Activated CD8-positive, alpha-beta T cell treated with anti-CD3 and anti-CD28 coated beads, Interleukin-2, amount 10 ng/mL, durations not matched to agents 7 days and 5 days (primary cell): ENCODE measurements at regions of chr20 and their contacts with region 1.

Region 1: GRCh38 chr20:47272893-47273590 is 83.5 kb downstream of the ZMYND8 start:
- DNase-seq: peak; percentile 68
- ATAC-seq: peak; percentile 59
- H3K4me3 Mint-ChIP-seq: no peak overlapping the region
- H3K27ac Mint-ChIP-seq: no peak overlapping the region
- H3K4me1 Mint-ChIP-seq: peaks cover 39% of the 10 kb centered on the region
- H3K27me3 Mint-ChIP-seq: no peaks in the 10 kb centered on the region

Region 2: DNA sequence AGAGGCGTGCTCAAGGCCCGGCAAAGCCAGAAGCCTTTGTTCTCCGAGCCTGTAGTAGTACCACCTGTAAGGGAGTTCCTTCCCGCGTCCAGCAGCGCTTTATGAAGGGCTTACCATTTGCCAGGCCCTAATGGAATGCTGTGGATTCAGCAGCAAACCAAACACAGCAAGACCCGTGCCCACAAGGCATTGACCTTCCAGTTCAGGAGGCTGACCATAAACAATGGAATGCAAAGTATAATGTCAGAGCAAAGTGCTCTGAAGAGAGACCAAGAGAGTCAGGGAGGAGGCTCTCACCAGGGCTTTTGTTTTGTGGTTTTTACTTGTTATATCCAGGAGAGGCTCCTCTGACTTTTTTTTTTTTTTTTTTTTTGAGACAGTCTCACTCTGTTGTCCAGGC is 126.3 kb before region 1 on chr20:
- CTCF ChIA-PET with region 1: no interaction called
- POLR2A ChIA-PET with region 1: no interaction called
- DNase-seq: no peak
- ATAC-seq: no peak
- H3K4me3 Mint-ChIP-seq: no peak overlapping the region
- H3K27ac Mint-ChIP-seq: no peak overlapping the region
- H3K4me1 Mint-ChIP-seq: peaks cover 3% of the 10 kb centered on the region
- H3K27me3 Mint-ChIP-seq: peaks cover 2% of the 10 kb centered on the region

Region 3: DNA sequence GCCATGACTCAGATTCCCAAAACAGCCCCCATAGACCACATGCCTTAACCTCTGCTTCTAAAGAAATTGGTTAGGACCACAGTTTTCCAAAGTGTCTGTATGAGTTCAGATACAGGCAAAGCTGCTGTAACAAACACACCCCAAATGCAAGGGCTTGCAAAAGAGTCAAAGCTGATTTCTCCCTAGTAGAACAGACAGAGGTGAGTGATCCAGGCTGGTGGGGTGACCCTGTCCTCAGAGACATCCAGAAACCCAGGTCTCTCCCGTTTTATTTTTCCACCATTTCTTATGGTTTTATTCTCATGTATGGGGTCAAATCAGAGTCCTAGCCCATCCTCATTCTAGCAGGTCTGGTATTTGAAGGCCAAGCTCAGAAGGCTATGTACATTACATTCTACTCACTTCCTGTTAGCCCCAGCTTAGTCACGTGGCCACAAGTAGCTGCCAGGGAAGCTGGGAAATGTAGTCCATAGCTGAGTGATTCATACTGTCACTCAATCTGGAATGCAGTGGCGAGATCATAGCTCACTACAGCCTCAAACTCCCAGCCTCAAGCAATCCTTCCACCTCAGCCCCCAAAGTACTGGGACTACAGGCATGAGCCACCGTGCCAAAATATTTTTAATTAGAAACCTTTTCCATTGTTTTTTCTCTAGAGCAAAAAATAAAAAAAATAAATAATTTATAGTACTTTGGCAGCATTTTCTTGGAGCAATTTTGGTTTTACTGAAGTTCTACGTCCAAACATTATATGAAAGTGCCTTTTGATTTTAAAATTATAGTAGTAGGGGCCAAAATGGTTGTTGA is 91.8 kb before region 1 on chr20:
- CTCF ChIA-PET with region 1: no interaction called
- POLR2A ChIA-PET with region 1: no interaction called
- DNase-seq: peak; percentile 50
- ATAC-seq: peak; percentile 57
- H3K4me3 Mint-ChIP-seq: no peak overlapping the region
- H3K27ac Mint-ChIP-seq: no peak overlapping the region
- H3K4me1 Mint-ChIP-seq: peaks cover 2% of the 10 kb centered on the region
- H3K27me3 Mint-ChIP-seq: peaks cover 5% of the 10 kb centered on the region

Region 4: GRCh38 chr20:47205577-47206498 is 67.2 kb before region 1 on chr20:
- CTCF ChIA-PET with region 1: interaction called, 22 read pairs
- POLR2A ChIA-PET with region 1: no interaction called
- DNase-seq: peak; percentile 74
- ATAC-seq: peak; percentile 68
- H3K4me3 Mint-ChIP-seq: no peak overlapping the region
- H3K27ac Mint-ChIP-seq: peak overlapping the region; percentile 56
- H3K4me1 Mint-ChIP-seq: peaks cover 7% of the 10 kb centered on the region
- H3K27me3 Mint-ChIP-seq: no peaks in the 10 kb centered on the region

Region 5: DNA sequence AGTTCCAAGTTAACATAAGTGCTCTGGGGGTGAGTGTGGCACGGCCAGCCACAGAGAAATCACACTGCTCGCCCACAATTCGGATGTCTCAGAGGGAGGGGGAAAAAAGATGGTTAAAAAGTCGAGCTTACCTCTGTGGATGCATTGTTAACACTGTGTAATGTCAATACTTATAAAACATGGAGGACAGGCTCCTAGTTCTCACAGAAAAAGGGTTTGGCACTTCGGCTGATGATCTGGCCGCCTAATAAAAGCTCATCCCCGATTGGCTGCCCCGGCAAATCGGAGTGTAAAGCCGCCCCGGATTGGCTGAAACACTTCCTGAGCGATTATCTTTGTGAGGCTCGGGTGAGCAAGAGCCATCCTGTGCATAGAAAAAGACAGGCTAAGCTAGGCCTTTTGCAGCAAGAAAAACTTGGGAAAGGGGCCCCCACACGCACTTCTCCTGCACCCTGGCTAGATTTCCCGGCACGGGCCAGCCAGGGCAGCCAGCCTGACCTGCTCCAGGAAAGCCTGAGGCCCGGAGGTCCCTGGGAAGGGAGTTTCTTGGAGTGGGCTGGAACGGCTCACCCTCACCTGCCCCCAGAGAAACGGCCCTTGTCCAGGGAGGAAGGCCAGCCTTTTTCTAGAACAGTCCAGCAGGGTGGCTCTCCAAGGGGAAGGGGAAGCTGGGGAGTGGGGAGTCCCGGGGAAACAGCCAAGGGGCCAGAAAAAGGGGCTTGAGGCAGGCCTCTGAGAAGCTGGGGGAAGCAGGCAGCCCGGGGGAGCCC is 83.7 kb after region 1 on chr20 and contains the start of gene ZMYND8:
- CTCF ChIA-PET with region 1: interaction called, 88 read pairs
- POLR2A ChIA-PET with region 1: interaction called, 6 read pairs
- DNase-seq: peak; percentile 96
- ATAC-seq: peak; percentile 83
- H3K4me3 Mint-ChIP-seq: peak within 1 kb of the TSS; percentile 84
- H3K27ac Mint-ChIP-seq: peak within 1 kb of the TSS; percentile 97
- H3K4me1 Mint-ChIP-seq: peaks cover 48% of the 10 kb centered on the region
- H3K27me3 Mint-ChIP-seq: no peaks in the 10 kb centered on the region
- total RNA-seq, gene ZMYND8: 44.3 to 44.7 TPM

Region 6: DNA sequence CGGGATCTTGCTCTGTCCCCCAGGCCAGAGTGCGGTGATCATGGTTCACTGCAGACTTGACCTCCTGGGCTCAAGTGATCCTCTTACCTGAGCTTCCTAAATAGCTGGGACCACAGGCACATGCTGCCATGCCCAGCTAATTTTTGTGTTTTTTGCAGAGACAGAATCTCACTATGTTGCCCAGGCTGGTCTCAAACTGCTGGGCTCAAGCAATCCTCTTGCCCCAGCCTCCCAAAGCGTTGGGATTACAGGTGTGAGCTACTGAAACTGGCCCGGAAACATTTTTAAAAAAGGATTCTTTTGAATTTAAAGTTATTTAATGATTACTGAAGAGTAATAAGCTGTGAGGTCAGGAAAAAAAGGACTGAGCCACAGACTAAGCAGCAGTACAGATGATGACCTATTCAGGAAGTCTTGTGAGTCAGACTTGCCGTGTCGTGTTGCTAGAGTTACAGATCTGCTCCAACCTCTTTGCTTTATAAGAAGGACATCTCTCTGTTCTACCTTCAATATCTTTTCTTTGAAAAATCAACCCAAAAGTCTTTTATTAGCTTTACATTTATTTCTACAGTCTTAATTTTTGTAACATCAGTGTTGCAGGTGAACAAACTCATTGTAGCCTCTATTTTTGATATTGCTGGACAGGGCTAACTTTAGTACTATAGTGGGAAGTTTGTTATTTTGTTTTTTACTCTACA is 337.4 kb after region 1 on chr20:
- CTCF ChIA-PET with region 1: interaction called, 10 read pairs
- POLR2A ChIA-PET with region 1: no interaction called
- DNase-seq: peak; percentile 89
- ATAC-seq: peak; percentile 87
- H3K4me3 Mint-ChIP-seq: peak overlapping the region; percentile 69
- H3K27ac Mint-ChIP-seq: peak overlapping the region; percentile 94
- H3K4me1 Mint-ChIP-seq: peaks cover 80% of the 10 kb centered on the region
- H3K27me3 Mint-ChIP-seq: no peaks in the 10 kb centered on the region